ENCODE measurements at regions of chr1 and their contacts with region 1.

Region 1: GRCh38 chr1:30489737-30490389 is 233.5 kb downstream of the MATN1 start:
- DNase-seq: no peak
- ATAC-seq: no peak
- H3K4me3 ChIP-seq: no peak overlapping the region
- H3K4me3 Mint-ChIP-seq: no peak overlapping the region
- H3K27ac ChIP-seq: no peak overlapping the region
- H3K27ac Mint-ChIP-seq: no peak overlapping the region
- H3K4me1 ChIP-seq: no peaks in the 10 kb centered on the region
- H3K4me1 Mint-ChIP-seq: no peaks in the 10 kb centered on the region
- H3K27me3 ChIP-seq: no peaks in the 10 kb centered on the region
- H3K27me3 Mint-ChIP-seq: peaks cover 0 to 17% (median 3%) of the 10 kb centered on the region in 5 donors

Region 2: DNA sequence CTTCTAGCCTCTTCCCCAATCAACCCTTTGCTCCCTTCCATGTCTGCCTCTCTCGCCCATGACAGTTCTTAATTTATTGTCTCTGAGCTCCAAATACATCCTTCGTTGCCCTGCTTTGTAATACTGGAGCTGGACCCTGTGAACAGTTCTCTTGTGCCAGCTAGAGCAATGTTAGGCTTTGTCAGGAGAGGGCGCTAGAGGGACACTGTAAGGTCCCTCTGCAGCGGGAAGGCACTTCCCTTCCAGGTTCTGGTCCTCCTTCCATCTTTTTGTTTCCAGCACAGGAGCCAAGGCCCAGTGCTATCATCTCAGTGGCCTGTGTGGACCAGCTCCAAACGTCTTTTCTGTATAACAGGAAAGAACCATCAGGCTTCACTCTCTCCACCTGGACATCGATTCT is 1157.7 kb before region 1 on chr1:
- CTCF ChIA-PET with region 1: no interaction called
- POLR2A ChIA-PET with region 1: no interaction called
- intact Hi-C with region 1: no loop called
- DNase-seq: no peak
- ATAC-seq: no peak
- H3K4me3 ChIP-seq: no peak overlapping the region
- H3K4me3 Mint-ChIP-seq: no peak overlapping the region
- H3K27ac ChIP-seq: no peak overlapping the region
- H3K27ac Mint-ChIP-seq: no peak overlapping the region
- H3K4me1 ChIP-seq: no peaks in the 10 kb centered on the region
- H3K4me1 Mint-ChIP-seq: no peaks in the 10 kb centered on the region
- H3K27me3 ChIP-seq: no peaks in the 10 kb centered on the region
- H3K27me3 Mint-ChIP-seq: peaks cover 17 to 44% (median 26%) of the 10 kb centered on the region in 5 donors

Region 3: GRCh38 chr1:30099587-30100523 is 390.0 kb before region 1 on chr1:
- CTCF ChIA-PET with region 1: no interaction called
- POLR2A ChIA-PET with region 1: no interaction called
- intact Hi-C with region 1: loop called in 1 of 2 experiments (anchors 5 kb)
- DNase-seq: no peak
- ATAC-seq: no peak
- H3K4me3 ChIP-seq: no peak overlapping the region
- H3K4me3 Mint-ChIP-seq: no peak overlapping the region
- H3K27ac ChIP-seq: no peak overlapping the region
- H3K27ac Mint-ChIP-seq: no peak overlapping the region
- H3K4me1 ChIP-seq: no peaks in the 10 kb centered on the region
- H3K4me1 Mint-ChIP-seq: no peaks in the 10 kb centered on the region
- H3K27me3 ChIP-seq: no peaks in the 10 kb centered on the region
- H3K27me3 Mint-ChIP-seq: peaks cover 0 to 4% (median 3%) of the 10 kb centered on the region in 5 donors

Region 4: GRCh38 chr1:30801771-30802198 is 311.9 kb after region 1 on chr1:
- CTCF ChIA-PET with region 1: no interaction called
- POLR2A ChIA-PET with region 1: no interaction called
- intact Hi-C with region 1: no loop called
- DNase-seq: peak; percentile 47 to 85 (median 70)
- ATAC-seq: peak; percentile 85
- H3K4me3 ChIP-seq: no peak overlapping the region
- H3K4me3 Mint-ChIP-seq: peak overlapping the region in 4 of 10 donors; percentile 25 to 66 (median 42)
- H3K27ac ChIP-seq: no peak overlapping the region
- H3K27ac Mint-ChIP-seq: peak overlapping the region in 1 of 9 donors; percentile 69
- H3K4me1 ChIP-seq: no peaks in the 10 kb centered on the region
- H3K4me1 Mint-ChIP-seq: peaks cover 0 to 9% (median 4%) of the 10 kb centered on the region in 7 donors
- H3K27me3 ChIP-seq: peaks cover 0 to 5% of the 10 kb centered on the region in 2 donors
- H3K27me3 Mint-ChIP-seq: peaks cover 25 to 48% (median 29%) of the 10 kb centered on the region in 5 donors

Region 5: GRCh38 chr1:31633053-31633452 is 1143.2 kb after region 1 on chr1:
- CTCF ChIA-PET with region 1: no interaction called
- POLR2A ChIA-PET with region 1: no interaction called
- intact Hi-C with region 1: no loop called
- DNase-seq: peak in 1 of 9 donors; percentile 40
- ATAC-seq: no peak
- H3K4me3 ChIP-seq: no peak overlapping the region
- H3K4me3 Mint-ChIP-seq: no peak overlapping the region
- H3K27ac ChIP-seq: no peak overlapping the region
- H3K27ac Mint-ChIP-seq: no peak overlapping the region
- H3K4me1 ChIP-seq: peaks cover 0 to 9% of the 10 kb centered on the region in 2 donors
- H3K4me1 Mint-ChIP-seq: peaks cover 0 to 27% (median 9%) of the 10 kb centered on the region in 7 donors
- H3K27me3 ChIP-seq: no peaks in the 10 kb centered on the region
- H3K27me3 Mint-ChIP-seq: no peaks in the 10 kb centered on the region

Measured in naive thymus-derived CD4-positive, alpha-beta T cell (primary cell).